ENCODE measurements at regions of chr19 and their contacts with region 1.

Region 1: DNA sequence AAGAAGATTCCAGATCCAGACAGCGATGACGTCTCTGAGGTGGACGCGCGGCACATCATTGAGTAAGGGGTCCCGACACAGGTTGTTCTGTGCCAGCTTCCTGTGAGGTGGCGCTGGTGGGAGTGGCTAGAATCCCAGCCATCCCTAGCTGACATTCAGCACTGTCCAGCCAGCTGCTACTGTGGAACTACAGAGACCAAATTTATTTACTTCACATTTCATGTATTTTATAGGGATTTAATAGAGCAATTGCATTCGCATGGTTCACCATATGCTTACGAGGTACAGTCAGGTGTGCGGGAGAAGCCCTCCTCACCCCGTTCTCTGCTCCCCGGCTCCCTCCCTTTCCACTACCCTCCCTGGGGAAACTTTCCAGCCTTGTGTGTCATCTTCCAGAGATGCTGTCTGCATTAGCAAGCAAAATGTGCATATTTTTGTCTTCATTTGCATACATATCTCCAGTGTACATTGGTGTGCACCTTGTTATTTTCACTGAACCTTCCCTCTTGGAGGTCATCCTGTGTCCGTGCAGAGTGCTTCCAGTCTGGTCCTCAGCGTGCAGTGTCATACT is 47.2 kb downstream of the SMARCA4 start:
- DNase-seq: no peak
- ATAC-seq: no peak
- H3K4me3 ChIP-seq: no peak overlapping the region
- H3K27ac ChIP-seq: no peak overlapping the region
- H3K4me1 ChIP-seq: no peaks in the 10 kb centered on the region
- H3K27me3 ChIP-seq: no peaks in the 10 kb centered on the region
- CTCF ChIP-seq: no peak
- POLR2A ChIP-seq: no peak
- RAD21 ChIP-seq: no peak

Region 2: DNA sequence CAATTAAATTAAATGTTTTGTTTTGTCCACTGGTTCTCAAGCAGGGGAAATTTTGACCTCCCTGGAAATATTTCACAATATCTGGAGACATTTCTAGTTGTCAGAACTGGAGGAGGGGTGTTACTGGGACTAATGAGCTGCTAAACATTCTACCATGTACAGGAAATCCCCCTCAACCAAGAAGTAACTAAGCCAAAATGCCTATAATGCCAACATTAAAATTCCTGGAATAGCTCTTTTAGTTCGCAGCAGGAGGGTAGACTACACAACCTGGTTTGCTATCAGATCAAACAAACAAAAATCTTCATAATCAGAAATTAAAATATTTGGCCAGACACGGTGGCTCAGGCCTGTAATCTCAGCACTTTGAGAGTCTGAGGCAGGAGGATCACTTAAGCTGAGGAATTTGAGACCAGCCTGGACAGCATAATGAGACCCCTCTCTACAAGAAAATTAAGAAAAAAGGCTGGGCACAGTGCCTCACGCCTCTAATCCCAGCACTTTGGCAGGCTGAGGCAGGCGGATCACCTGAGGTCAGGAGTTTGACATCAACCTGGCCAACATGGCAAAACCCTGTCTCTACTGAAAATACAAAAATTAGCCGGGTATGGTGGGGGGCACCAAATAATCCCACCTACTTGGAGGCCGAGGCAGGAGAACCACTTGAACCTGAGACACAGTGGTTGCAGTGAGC is 60.9 kb before region 1 on chr19:
- CTCF ChIA-PET with region 1: no interaction called
- POLR2A ChIA-PET with region 1: no interaction called
- dilution Hi-C with region 1: no loop called
- in situ Hi-C with region 1: no loop called
- intact Hi-C with region 1: loop called (anchors 2 kb)
- DNase-seq: peak; percentile 60
- ATAC-seq: peak; percentile 59
- H3K4me3 ChIP-seq: no peak overlapping the region
- H3K27ac ChIP-seq: peak overlapping the region; percentile 54; the same call in 1 of the 2 replicates
- H3K4me1 ChIP-seq: peaks cover 4% of the 10 kb centered on the region
- H3K27me3 ChIP-seq: no peaks in the 10 kb centered on the region
- CTCF ChIP-seq: no peak
- POLR2A ChIP-seq: no peak
- RAD21 ChIP-seq: no peak

Measured in IMR-90 (cell line).